WTC11 (cell line): ENCODE measurements at regions of chr15 and their contacts with region 1.

Region 1: DNA sequence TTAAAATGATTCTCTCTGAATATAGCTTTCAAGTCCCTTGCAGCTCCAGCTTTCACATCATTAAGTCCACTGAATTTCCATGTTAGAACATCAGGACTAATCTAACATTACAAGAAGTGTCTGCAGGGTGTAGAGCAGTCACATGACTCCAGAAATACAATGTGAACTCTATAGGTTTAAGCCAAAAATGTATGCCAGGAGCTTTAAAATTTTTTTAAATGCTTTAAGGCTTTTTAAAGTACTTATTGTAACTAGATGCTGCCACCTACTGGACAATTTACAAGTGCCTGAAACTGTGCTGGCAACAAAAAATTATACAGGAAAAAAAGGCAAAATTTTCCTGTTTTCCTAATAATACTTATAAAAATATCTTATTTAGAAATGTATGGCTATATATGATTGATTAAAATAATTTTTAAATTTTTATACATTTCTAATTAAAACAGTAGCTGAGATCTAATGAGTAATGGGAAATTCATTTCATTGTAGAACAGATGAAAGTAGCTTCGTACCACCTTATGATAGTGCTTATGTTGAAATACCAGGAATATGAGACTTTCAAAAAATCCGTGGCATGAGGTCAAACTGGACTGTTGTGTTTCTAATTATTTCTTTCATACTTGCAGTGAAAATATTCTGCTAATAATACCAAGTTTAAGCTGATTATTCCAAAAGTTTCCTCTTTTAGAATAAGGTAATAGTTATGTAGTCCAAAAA is 25.7 kb downstream of the FSIP1 start:
- DNase-seq: no peak
- ATAC-seq: no peak
- H3K4me3 Mint-ChIP-seq: no peak overlapping the region
- H3K27ac Mint-ChIP-seq: no peak overlapping the region
- H3K4me1 Mint-ChIP-seq: no peaks in the 10 kb centered on the region
- H3K27me3 Mint-ChIP-seq: no peaks in the 10 kb centered on the region
- CTCF ChIP-seq: peak; percentile 53

Region 2: GRCh38 chr15:39580117-39580484 is 176.9 kb before region 1 on chr15:
- CTCF ChIA-PET with region 1: interaction called, 40 read pairs
- POLR2A ChIA-PET with region 1: no interaction called
- DNase-seq: peak; percentile 95
- ATAC-seq: peak; percentile 38
- H3K4me3 Mint-ChIP-seq: peak overlapping the region; percentile 87
- H3K27ac Mint-ChIP-seq: peak overlapping the region; percentile 99
- H3K4me1 Mint-ChIP-seq: peaks cover 28% of the 10 kb centered on the region
- H3K27me3 Mint-ChIP-seq: peaks cover 16% of the 10 kb centered on the region
- CTCF ChIP-seq: peak; percentile 94

Region 3: DNA sequence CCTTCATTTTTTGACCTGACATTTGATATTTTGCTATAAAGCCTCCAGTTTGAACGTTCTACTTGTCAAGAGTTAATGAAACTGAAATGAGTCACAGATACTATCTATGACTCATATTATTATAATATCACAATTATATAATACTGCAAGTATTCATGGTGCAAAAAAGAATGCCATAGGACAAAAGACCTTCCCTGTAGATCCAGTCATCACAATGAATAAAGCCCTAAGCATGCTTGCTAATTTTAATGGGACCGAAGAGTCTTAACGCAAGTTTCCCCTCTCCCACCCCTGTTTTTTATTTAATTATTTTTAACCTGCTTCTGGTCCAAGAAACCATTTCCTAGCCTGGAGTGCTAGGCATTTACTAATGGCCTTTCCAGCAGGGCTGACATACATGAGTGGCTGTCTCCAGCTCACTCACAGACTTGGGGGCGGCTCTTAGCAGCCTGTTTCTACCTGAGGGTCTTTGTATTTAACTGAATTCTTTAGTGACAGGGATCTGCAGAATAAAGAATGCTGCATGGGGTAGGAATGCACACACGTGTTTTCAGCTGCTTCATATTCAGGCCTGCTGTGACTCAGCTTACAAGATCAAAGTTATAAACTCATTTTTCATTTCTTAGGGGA is 114.8 kb before region 1 on chr15:
- CTCF ChIA-PET with region 1: interaction called, 10 read pairs
- POLR2A ChIA-PET with region 1: no interaction called
- DNase-seq: no peak
- ATAC-seq: peak; percentile 82
- H3K4me3 Mint-ChIP-seq: no peak overlapping the region
- H3K27ac Mint-ChIP-seq: no peak overlapping the region
- H3K4me1 Mint-ChIP-seq: peaks cover 8% of the 10 kb centered on the region
- H3K27me3 Mint-ChIP-seq: no peaks in the 10 kb centered on the region
- CTCF ChIP-seq: no peak

Region 4: GRCh38 chr15:39680868-39681267 is 76.1 kb before region 1 on chr15:
- CTCF ChIA-PET with region 1: interaction called, 40 read pairs
- POLR2A ChIA-PET with region 1: no interaction called
- DNase-seq: no peak
- ATAC-seq: no peak
- H3K4me3 Mint-ChIP-seq: no peak overlapping the region
- H3K27ac Mint-ChIP-seq: no peak overlapping the region
- H3K4me1 Mint-ChIP-seq: no peaks in the 10 kb centered on the region
- H3K27me3 Mint-ChIP-seq: no peaks in the 10 kb centered on the region
- CTCF ChIP-seq: no peak

Region 5: GRCh38 chr15:39699516-39700374 is 57.2 kb before region 1 on chr15:
- CTCF ChIA-PET with region 1: interaction called, 15 read pairs
- POLR2A ChIA-PET with region 1: interaction called, 3 read pairs
- DNase-seq: no peak
- ATAC-seq: no peak
- H3K4me3 Mint-ChIP-seq: no peak overlapping the region
- H3K27ac Mint-ChIP-seq: no peak overlapping the region
- H3K4me1 Mint-ChIP-seq: peaks cover 8% of the 10 kb centered on the region
- H3K27me3 Mint-ChIP-seq: no peaks in the 10 kb centered on the region
- CTCF ChIP-seq: no peak

Region 6: DNA sequence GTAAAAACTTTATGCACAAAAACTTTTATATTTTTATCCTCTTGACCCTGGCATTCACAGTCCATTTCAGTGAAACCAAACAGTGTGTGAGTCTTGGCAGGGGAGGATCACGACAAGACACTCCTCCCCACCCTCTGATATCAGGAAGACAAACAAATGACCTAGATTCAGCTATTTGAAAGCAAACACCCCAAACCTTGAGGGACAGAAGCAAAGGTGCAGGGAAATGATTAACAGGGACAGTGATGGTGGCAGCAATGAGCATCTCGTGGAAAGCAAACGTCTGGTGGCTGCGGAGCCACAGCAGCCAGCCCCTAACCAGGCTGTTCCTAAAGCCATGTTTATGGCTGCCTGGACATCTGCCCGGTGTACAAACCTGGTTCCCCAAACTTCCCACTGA is 26.4 kb before region 1 on chr15:
- CTCF ChIA-PET with region 1: interaction called, 19 read pairs
- POLR2A ChIA-PET with region 1: no interaction called
- DNase-seq: no peak
- ATAC-seq: no peak
- H3K4me3 Mint-ChIP-seq: no peak overlapping the region
- H3K27ac Mint-ChIP-seq: no peak overlapping the region
- H3K4me1 Mint-ChIP-seq: no peaks in the 10 kb centered on the region
- H3K27me3 Mint-ChIP-seq: no peaks in the 10 kb centered on the region
- CTCF ChIP-seq: no peak

Region 7: DNA sequence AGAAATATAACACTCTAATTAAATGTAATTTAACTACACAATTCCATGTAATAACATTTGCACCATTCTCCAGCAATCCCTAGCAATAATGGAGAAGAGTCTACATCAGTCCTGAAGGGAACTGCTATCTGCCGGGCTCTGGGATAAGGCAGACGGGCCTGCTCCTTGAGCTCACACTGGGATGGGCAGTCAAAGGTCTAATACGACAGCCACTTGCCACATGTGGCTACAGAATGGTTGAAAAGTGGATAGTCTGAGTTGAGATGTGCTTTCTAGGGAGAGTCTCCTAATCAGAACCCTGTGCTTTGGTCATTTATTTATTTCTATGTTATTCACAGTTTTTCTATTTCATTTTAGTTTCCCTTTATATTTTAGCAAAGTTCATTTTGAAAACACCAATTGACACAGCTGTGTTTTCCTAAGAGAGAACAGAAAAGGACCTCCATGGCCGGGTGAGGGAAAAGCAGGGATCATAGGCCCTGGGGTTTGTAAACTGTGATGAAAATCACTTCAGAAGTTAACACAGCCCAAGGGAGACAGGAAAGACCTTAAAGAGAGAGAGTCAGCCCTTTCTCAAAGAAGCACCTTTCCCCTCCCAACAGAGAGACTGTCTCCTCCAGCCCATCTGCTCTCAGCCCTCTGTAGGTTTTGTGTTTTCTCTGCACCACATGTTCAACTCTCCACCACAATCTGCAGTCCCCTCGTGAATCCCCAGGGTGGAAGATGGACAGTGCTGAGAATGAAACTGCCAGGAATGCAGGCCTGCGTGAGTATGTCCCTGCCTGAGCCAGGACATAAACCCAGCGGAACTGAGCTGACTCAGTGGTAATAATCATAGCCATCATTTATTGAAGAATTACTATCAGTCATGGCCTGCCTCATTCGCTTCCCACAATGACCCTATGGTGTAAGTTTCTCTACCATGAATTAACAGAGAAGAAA is 14.1 kb after region 1 on chr15:
- CTCF ChIA-PET with region 1: interaction called, 33 read pairs
- POLR2A ChIA-PET with region 1: no interaction called
- DNase-seq: no peak
- ATAC-seq: peak; percentile 56
- H3K4me3 Mint-ChIP-seq: no peak overlapping the region
- H3K27ac Mint-ChIP-seq: peak overlapping the region; percentile 27; the same call in 1 of the 2 replicates
- H3K4me1 Mint-ChIP-seq: peaks cover 8% of the 10 kb centered on the region
- H3K27me3 Mint-ChIP-seq: no peaks in the 10 kb centered on the region
- CTCF ChIP-seq: no peak

Region 8: DNA sequence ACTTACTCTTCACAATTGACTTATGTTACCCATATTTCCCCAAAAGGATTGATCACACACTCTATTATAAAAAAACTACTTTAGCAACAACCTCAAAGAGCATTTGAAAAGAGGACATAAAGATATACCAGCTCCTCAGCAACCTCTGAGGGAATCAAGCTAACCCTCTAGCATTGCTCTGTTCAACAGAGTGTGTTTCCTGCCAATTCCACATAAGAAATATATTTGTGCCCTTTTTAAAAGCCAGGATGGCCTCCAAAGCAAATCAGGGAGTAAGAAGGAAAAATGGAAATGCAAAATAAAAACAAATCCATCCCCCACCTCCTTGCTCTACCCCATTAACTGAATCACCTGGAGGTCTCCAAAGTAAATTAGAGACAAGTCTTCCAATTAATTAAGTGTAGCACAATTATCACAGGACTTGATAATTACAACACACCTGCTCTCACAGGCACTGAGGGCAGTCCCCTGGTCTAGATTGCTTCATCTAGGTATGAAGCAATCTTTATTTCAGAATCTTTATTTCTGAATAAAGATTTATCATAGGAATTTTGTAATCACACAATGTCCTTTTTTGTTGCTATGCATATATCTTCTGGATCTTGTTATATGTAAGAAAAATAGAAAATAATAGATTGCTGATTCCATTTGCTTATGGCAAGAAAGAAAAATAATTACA is 128.3 kb after region 1 on chr15:
- CTCF ChIA-PET with region 1: no interaction called
- POLR2A ChIA-PET with region 1: no interaction called
- DNase-seq: no peak
- ATAC-seq: no peak
- H3K4me3 Mint-ChIP-seq: peak overlapping the region; percentile 36
- H3K27ac Mint-ChIP-seq: peak overlapping the region; percentile 99
- H3K4me1 Mint-ChIP-seq: peaks cover 64% of the 10 kb centered on the region
- H3K27me3 Mint-ChIP-seq: no peaks in the 10 kb centered on the region
- CTCF ChIP-seq: no peak